Naive thymus-derived CD4-positive, alpha-beta T cell (primary cell): ENCODE measurements at regions of chr2 and their contacts with region 1.

Region 1: GRCh38 chr2:96407041-96407918 is 71.7 kb downstream of the NCAPH start:
- DNase-seq: peak; percentile 48 to 92 (median 88)
- ATAC-seq: peak; percentile 94
- H3K4me3 ChIP-seq: peak overlapping the region; percentile 49
- H3K4me3 Mint-ChIP-seq: peak overlapping the region; percentile 67 to 91 (median 83)
- H3K27ac ChIP-seq: peak overlapping the region; percentile 33
- H3K27ac Mint-ChIP-seq: peak overlapping the region; percentile 89 to 100 (median 96)
- H3K4me1 ChIP-seq: peaks cover 19 to 31% of the 10 kb centered on the region in 2 donors
- H3K4me1 Mint-ChIP-seq: peaks cover 18 to 51% (median 36%) of the 10 kb centered on the region in 7 donors
- H3K27me3 ChIP-seq: no peaks in the 10 kb centered on the region
- H3K27me3 Mint-ChIP-seq: no peaks in the 10 kb centered on the region

Region 2: GRCh38 chr2:96305091-96305978 is 101.9 kb before region 1 on chr2 and contains the start of gene SNRNP200:
- CTCF ChIA-PET with region 1: no interaction called
- POLR2A ChIA-PET with region 1: interaction called, 3 read pairs
- intact Hi-C with region 1: loop called in 1 of 2 experiments (anchors 2 kb)
- DNase-seq: peak; percentile 77 to 92 (median 90)
- ATAC-seq: peak; percentile 96
- H3K4me3 ChIP-seq: peak within 1 kb of the TSS; percentile 85
- H3K4me3 Mint-ChIP-seq: peak within 1 kb of the TSS; percentile 94 to 100 (median 99)
- H3K27ac ChIP-seq: peak within 1 kb of the TSS; percentile 94
- H3K27ac Mint-ChIP-seq: peak within 1 kb of the TSS; percentile 97 to 100 (median 99)
- H3K4me1 ChIP-seq: peaks cover 30 to 41% of the 10 kb centered on the region in 2 donors
- H3K4me1 Mint-ChIP-seq: peaks cover 41 to 61% (median 58%) of the 10 kb centered on the region in 7 donors
- H3K27me3 ChIP-seq: no peaks in the 10 kb centered on the region
- H3K27me3 Mint-ChIP-seq: no peaks in the 10 kb centered on the region
- total RNA-seq, gene SNRNP200: 165 to 255 (median 212) TPM

Region 3: DNA sequence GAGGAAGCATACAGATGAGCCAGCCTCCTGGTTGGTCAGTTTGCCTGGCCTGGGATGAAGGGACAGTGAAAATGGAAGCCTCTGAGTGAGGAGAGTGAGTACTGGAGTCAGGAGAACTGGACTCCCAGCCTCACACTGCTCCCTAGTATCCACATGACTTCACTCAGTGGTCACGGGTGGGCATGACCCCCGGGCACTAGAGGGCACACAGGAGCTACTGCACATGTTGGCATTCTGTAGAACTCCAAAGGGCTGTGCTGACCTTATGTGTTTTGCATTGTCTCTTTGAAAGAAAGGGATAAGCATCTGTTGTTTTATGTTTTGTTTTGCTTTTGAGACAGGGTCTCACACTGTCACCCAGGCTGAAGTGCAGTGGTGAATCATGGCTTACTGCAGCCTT is 48.0 kb before region 1 on chr2:
- CTCF ChIA-PET with region 1: no interaction called
- POLR2A ChIA-PET with region 1: interaction called, 4 read pairs
- intact Hi-C with region 1: loop called in 1 of 2 experiments (anchors 1 kb)
- DNase-seq: peak in 8 of 9 donors; percentile 26 to 64 (median 46)
- ATAC-seq: peak; percentile 83
- H3K4me3 ChIP-seq: no peak overlapping the region
- H3K4me3 Mint-ChIP-seq: no peak overlapping the region
- H3K27ac ChIP-seq: no peak overlapping the region
- H3K27ac Mint-ChIP-seq: peak overlapping the region in 2 of 9 donors; percentile 33 to 64
- H3K4me1 ChIP-seq: peaks cover 0 to 12% of the 10 kb centered on the region in 2 donors
- H3K4me1 Mint-ChIP-seq: peaks cover 0 to 10% (median 1%) of the 10 kb centered on the region in 7 donors
- H3K27me3 ChIP-seq: no peaks in the 10 kb centered on the region
- H3K27me3 Mint-ChIP-seq: no peaks in the 10 kb centered on the region

Region 4: DNA sequence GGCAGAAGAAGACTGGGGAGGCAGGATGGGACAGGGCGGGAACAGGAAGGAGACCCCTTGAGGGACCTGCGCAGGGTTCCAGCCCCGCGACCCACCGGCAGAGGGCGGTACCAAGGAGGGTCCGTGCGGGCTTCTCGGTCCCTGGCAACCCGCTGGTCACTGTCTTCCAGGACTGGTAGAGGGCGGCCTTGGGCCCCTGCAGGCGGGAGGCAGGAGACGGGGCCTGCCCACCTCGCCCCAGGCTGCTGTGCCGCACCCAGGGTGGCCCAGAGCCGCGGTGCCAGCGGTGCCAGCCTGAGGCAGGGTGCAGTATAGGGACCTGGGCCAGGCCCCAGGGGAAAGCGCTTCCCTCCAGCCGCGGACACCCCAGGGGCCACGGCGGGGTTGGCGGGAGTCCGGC is 63.4 kb after region 1 on chr2:
- CTCF ChIA-PET with region 1: interaction called, 4 read pairs
- POLR2A ChIA-PET with region 1: no interaction called
- intact Hi-C with region 1: loop called in 1 of 2 experiments (anchors 2 kb)
- DNase-seq: peak; percentile 9 to 69 (median 32)
- ATAC-seq: peak; percentile 82
- H3K4me3 ChIP-seq: no peak overlapping the region
- H3K4me3 Mint-ChIP-seq: peak overlapping the region in 6 of 10 donors; percentile 6 to 70 (median 24)
- H3K27ac ChIP-seq: no peak overlapping the region
- H3K27ac Mint-ChIP-seq: peak overlapping the region in 1 of 9 donors; percentile 60
- H3K4me1 ChIP-seq: peaks cover 0 to 4% of the 10 kb centered on the region in 2 donors
- H3K4me1 Mint-ChIP-seq: peaks cover 3 to 10% (median 5%) of the 10 kb centered on the region in 7 donors
- H3K27me3 ChIP-seq: no peaks in the 10 kb centered on the region
- H3K27me3 Mint-ChIP-seq: peaks cover 5 to 12% (median 6%) of the 10 kb centered on the region in 5 donors

Region 5: GRCh38 chr2:96485751-96486651 is 78.7 kb after region 1 on chr2:
- CTCF ChIA-PET with region 1: no interaction called
- POLR2A ChIA-PET with region 1: interaction called, 4 read pairs
- intact Hi-C with region 1: loop called (anchors 1 to 5 kb)
- DNase-seq: peak; percentile 46 to 83 (median 72)
- ATAC-seq: peak; percentile 93
- H3K4me3 ChIP-seq: peak overlapping the region; percentile 71
- H3K4me3 Mint-ChIP-seq: peak overlapping the region; percentile 87 to 97 (median 94)
- H3K27ac ChIP-seq: peak overlapping the region; percentile 84
- H3K27ac Mint-ChIP-seq: peak overlapping the region; percentile 94 to 100 (median 98)
- H3K4me1 ChIP-seq: peaks cover 6 to 14% of the 10 kb centered on the region in 2 donors
- H3K4me1 Mint-ChIP-seq: peaks cover 11 to 62% (median 29%) of the 10 kb centered on the region in 7 donors
- H3K27me3 ChIP-seq: no peaks in the 10 kb centered on the region
- H3K27me3 Mint-ChIP-seq: peaks cover 0 to 4% (median 2%) of the 10 kb centered on the region in 5 donors

Region 6: GRCh38 chr2:96554293-96555145 is 147.2 kb after region 1 on chr2:
- CTCF ChIA-PET with region 1: interaction called, 34 read pairs
- POLR2A ChIA-PET with region 1: interaction called, 13 read pairs
- intact Hi-C with region 1: loop called (anchors 1 kb)
- DNase-seq: peak; percentile 46 to 80 (median 73)
- ATAC-seq: peak; percentile 76
- H3K4me3 ChIP-seq: no peak overlapping the region
- H3K4me3 Mint-ChIP-seq: peak overlapping the region in 7 of 10 donors; percentile 3 to 67 (median 32)
- H3K27ac ChIP-seq: no peak overlapping the region
- H3K27ac Mint-ChIP-seq: peak overlapping the region; percentile 33 to 88 (median 71)
- H3K4me1 ChIP-seq: peaks cover 4 to 7% of the 10 kb centered on the region in 2 donors
- H3K4me1 Mint-ChIP-seq: peaks cover 0 to 30% (median 15%) of the 10 kb centered on the region in 7 donors
- H3K27me3 ChIP-seq: no peaks in the 10 kb centered on the region
- H3K27me3 Mint-ChIP-seq: peaks cover 0 to 2% (median 0%) of the 10 kb centered on the region in 5 donors